WTC11 (cell line): ENCODE measurements at regions of chr9 and their contacts with region 1.

Region 1: DNA sequence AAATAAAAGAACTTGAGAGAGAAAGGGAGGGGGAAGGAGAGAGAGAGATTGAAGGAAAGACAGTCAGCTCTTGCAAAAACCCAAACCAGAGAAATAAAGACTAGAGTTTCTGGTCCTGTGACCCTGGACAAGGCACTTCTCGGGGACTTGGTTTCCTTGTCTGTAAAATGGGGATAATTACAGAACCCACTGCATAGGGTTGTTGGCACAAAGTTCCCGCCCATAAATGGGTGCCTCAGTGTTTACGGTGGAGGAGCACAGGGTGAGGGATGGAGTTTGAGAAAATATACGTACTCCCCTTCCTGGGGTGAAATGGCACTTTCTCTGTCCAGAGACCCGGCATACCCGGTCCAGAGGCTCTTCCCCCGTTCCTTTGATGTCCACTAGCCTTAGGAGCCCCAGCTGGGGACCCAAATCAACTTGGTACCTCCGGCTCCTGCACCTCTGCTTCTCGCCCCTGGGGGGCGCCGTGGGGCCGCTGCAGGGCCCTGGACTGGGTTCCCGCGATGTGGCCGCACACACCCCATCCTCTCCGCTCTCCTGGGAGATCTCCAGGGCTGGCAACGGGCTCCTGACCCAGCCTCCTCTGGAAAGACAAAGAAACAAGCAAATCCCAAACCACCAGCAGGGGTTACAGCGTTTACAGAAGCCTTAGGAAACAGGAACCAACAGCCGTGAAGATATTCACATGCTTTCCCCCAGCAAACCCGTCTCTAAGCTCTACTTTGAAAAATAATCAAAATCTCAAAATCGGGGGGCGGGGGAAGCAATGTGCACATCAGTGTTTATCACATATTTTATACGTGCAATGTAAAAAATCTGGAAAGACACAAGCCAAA is 26.3 kb downstream of the PTGES start:
- DNase-seq: peak; percentile 89
- ATAC-seq: peak; percentile 99
- H3K4me3 Mint-ChIP-seq: 0 out of 2 replicates have a peak overlapping the region, but pooled peaks have one; percentile 13
- H3K27ac Mint-ChIP-seq: no peak overlapping the region
- H3K4me1 Mint-ChIP-seq: peaks cover 6% of the 10 kb centered on the region
- H3K27me3 Mint-ChIP-seq: no peaks in the 10 kb centered on the region
- CTCF ChIP-seq: peak; percentile 95

Region 2: DNA sequence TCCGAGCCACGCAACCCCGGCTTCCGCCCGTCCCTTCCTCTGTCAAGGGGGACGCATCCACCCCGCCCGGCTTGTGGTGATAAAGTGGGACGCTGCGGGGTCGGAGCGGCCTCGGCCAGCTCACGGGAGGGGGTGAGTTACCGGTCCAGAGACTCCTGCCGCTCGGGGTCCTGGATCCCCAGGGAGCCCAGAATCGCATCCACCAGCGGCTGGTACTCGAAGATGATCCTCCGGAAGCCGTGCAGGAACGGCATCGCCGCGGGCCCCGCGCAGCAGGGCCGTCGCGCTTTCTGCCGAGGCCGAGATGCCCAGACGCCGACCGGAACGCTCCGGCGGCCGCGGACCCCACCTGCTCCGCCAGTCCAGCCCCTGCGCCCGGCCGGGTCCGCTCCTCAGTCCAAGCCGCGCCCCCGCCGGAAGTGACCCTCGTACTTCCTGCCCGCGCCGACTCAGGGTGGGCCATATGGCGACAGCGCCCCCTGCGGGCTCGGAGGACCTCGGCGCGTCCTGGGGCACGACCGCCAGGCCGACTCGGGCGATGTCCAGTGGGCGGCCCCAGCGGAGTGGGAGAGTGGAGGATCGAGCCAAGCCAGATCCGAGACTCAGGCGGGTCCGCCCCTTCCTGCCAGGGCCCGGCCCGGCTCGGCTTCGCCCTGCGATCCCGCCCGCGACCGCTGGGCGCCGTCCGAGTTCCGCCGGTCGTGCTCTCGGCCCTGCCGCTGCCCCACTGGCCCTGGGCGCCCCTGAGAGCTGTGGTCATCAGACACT is 84.6 kb before region 1 on chr9 and contains the start of gene ASB6:
- CTCF ChIA-PET with region 1: interaction called, 25 read pairs
- POLR2A ChIA-PET with region 1: no interaction called
- DNase-seq: peak; percentile 99
- ATAC-seq: peak; percentile 98
- H3K4me3 Mint-ChIP-seq: peak within 1 kb of the TSS; percentile 79
- H3K27ac Mint-ChIP-seq: peak within 1 kb of the TSS; percentile 92
- H3K4me1 Mint-ChIP-seq: peaks cover 14% of the 10 kb centered on the region
- H3K27me3 Mint-ChIP-seq: no peaks in the 10 kb centered on the region; the same call in 1 of the 2 replicates
- CTCF ChIP-seq: peak; percentile 97
- total RNA-seq, gene ASB6: 19.3 to 20.0 TPM (median 19.7 TPM) in 3 replicates

Region 3: DNA sequence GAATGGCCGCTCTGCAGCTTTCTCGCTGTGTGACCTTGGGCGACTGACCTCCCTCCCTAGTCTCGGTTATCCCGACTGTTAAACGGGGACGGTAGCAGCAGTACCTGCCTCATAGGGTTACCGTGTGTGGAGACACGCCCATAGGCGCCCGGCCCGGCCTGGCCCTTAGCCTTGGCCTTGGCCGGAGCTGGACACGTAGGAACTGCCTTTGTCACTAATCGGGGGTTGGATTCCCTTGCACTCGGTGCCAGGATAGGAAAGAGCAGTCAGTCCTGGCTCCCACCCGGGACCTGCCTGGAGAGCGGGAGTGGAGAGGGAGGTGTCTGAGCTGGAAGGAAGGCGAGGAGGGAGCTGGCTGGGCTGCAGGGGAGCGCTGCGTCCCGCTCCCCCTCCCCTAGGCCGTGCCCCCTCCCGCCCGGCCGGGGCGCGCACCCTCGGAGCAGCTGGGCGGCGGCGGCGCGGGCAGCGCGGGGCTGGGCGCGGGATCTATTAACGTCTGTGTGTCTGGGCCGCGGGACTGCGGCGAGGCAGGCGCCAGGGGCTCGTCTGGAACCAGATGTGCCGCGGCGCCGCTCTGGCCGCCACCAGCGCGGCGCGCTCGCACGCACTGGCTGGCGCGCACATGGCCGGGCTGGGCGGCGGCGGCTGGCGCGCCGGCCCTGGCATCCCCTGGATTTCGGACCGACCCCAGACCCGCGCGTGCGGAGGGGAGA is 29.4 kb before region 1 on chr9:
- CTCF ChIA-PET with region 1: interaction called, 26 read pairs
- POLR2A ChIA-PET with region 1: no interaction called
- DNase-seq: peak; percentile 44
- ATAC-seq: peak; percentile 68
- H3K4me3 Mint-ChIP-seq: peak overlapping the region; percentile 91
- H3K27ac Mint-ChIP-seq: no peak overlapping the region
- H3K4me1 Mint-ChIP-seq: peaks cover 10% of the 10 kb centered on the region
- H3K27me3 Mint-ChIP-seq: peaks cover 13% of the 10 kb centered on the region
- CTCF ChIP-seq: no peak

Region 4: GRCh38 chr9:129714511-129715061 is 12.0 kb before region 1 on chr9:
- CTCF ChIA-PET with region 1: interaction called, 15 read pairs
- POLR2A ChIA-PET with region 1: no interaction called
- DNase-seq: no peak
- ATAC-seq: no peak
- H3K4me3 Mint-ChIP-seq: no peak overlapping the region
- H3K27ac Mint-ChIP-seq: no peak overlapping the region
- H3K4me1 Mint-ChIP-seq: peaks cover 6% of the 10 kb centered on the region; the same call in 1 of the 2 replicates
- H3K27me3 Mint-ChIP-seq: no peaks in the 10 kb centered on the region
- CTCF ChIP-seq: no peak

Region 5: DNA sequence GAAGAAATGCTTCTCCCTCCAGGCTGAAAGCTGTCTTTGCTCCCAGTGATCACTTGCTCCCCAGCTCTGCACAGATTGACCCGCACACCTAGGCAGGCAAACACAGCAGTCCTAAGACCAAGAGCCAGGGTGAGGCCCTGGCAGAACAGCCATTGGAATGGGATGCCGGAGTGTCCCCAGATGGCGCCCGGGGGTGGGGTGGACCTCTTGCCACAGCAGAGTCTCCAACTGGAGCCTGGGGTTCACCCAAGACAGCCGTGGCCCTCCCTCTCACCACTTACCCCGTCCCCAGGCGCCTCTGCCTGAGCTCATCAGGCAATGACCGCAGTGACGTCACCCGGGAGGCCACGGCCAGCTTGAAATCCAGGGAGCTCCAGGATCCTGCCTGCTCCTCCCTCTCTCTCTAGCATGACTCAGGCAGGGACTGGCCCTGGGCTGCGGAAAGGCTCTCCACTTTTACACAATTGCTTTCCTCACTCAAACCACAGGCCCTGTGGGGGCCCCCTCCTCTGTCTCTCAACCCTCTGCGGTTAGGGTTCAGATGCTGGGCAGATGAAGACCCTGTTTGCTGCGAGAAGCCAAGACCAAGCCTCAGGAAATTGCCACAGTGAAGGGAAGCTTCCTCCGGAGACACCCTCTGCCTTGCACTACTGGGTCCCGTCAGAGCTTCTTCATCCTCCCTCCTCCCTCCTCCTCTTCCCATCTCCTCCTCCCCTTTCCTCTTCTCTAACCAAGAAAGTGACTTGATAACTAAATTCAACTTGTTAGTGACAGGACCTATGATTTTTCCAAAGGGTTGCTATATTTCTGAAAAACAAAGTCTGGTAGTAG is 50.6 kb after region 1 on chr9:
- CTCF ChIA-PET with region 1: interaction called, 22 read pairs
- POLR2A ChIA-PET with region 1: no interaction called
- DNase-seq: no peak
- ATAC-seq: no peak
- H3K4me3 Mint-ChIP-seq: no peak overlapping the region
- H3K27ac Mint-ChIP-seq: no peak overlapping the region
- H3K4me1 Mint-ChIP-seq: 0 out of 2 replicates have a peak, but pooled peaks cover 6% of the 10 kb centered on the region
- H3K27me3 Mint-ChIP-seq: no peaks in the 10 kb centered on the region
- CTCF ChIP-seq: no peak

Region 6: DNA sequence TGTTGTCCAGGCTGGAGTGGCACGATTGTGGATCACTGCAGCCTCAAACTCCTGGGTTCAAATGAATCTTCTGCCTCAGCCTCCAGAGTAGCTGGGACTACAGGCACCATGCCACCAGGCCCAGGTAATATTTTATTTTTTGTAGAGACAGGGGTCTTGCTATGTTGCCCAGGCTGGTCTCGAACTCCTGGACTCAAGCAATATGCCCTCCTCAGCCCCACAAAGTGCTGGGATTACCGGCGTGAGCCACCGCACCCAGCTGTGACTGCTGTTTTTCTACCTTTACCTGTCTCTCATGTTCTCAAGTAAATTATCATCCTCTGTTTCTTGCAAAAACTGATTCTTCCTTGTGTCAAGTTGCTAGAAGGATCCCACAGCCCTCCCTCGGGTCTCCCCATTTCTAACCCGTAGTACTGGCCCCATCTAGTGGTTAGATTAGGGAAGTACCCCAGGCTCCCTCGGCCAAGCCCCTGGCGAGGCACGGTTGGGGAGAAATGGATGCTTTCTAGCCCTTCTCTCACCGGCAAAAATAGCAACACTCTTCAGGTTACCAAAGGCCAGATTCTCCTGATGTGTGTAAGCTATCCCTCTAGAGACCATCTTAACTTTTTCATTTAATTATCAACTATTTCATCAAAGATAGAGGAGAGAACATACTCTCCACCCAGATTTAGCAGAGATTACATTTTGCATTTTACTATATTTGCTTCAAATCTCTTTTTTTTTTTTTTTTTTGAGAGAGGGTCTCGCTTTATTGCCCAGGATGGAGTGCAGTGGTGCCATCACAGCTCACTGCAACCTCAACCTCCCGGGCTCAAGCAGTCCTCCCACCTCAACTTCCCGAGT is 57.2 kb after region 1 on chr9:
- CTCF ChIA-PET with region 1: interaction called, 37 read pairs
- POLR2A ChIA-PET with region 1: interaction called, 5 read pairs
- DNase-seq: peak; percentile 84
- ATAC-seq: peak; percentile 97
- H3K4me3 Mint-ChIP-seq: no peak overlapping the region
- H3K27ac Mint-ChIP-seq: no peak overlapping the region
- H3K4me1 Mint-ChIP-seq: no peaks in the 10 kb centered on the region
- H3K27me3 Mint-ChIP-seq: no peaks in the 10 kb centered on the region; the same call in 1 of the 2 replicates
- CTCF ChIP-seq: peak; percentile 90